GM18951 (cell line): ENCODE measurements at regions of chr1 and their contacts with region 1.

Region 1: DNA sequence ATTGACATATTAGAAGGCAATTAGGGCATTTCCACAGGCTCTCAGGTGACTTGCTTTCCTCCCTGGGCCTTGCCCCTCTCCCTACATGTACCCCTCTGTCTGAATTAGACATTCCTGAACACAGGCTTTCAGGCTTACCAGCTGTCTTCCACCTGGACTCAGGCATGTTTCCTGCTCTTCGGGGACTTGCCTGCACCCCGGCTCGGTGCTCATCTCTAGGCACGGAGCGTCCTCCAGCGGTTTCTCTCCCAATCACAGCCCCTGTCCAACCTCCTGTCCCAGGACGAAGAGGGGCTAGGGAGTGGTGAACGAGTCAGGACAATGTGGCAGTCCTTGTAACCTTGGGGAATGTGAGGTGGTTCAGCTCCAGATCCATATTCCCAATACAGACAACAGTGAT is 4.2 kb downstream of the PROK1 start:
- POLR2A ChIP-seq: no peak

Region 2: GRCh38 chr1:110312188-110313121 is 142.7 kb before region 1 on chr1:
- in situ Hi-C with region 1: loop called (anchors 10 kb)
- POLR2A ChIP-seq: no peak